Caco-2 (cell line): ENCODE measurements at regions of chr2 and their contacts with region 1.

Region 1: DNA sequence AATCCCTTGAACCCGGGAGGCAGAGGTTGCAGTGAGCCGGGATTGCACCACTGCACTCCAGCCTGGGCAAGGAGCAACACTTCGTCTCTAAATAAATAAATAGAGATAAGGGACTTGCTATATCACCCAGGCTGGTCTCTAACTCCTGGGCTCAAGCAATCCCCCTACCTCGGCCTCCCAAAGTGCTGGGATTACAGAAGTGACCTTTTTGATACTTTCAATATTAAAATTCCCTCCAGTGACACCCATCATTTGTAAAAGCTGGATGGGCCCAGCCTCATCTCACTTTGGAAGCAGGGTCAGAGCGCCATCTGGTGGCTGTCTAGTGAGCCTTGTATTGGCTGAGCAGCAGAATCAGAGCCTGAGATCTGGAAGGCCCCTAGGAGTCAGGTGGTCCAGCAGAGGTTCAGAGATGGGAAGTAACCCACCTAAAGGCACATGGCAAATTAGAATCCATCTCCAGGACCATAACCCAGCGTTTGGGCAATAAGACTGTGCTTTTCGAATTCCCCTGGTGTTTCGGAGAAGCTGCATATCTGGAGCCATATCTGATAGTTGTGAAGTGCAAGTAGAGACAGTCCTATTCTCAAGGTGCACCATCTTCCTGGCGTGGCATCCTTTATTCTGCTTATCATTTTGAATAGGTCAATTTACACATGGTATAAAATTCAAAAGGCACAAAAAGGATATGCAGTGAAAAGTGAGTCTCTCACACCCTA is 18.3 kb upstream of the SLC35F6 start:
- DNase-seq: peak; percentile 85 to 89
- H3K4me3 ChIP-seq: no peak overlapping the region
- H3K4me3 Mint-ChIP-seq: no peak overlapping the region
- H3K27ac Mint-ChIP-seq: no peak overlapping the region
- H3K4me1 ChIP-seq: peaks cover 19% of the 10 kb centered on the region
- H3K4me1 Mint-ChIP-seq: peaks cover 11% of the 10 kb centered on the region
- H3K27me3 ChIP-seq: no peaks in the 10 kb centered on the region
- H3K27me3 Mint-ChIP-seq: no peaks in the 10 kb centered on the region
- CTCF ChIP-seq: peak; percentile 93 to 98

Region 2: GRCh38 chr2:26235085-26235484 is 510.7 kb before region 1 on chr2:
- CTCF ChIA-PET with region 1: no interaction called
- POLR2A ChIA-PET with region 1: no interaction called
- intact Hi-C with region 1: no loop called
- DNase-seq: peak in 1 of 2 experiments; percentile 22
- H3K4me3 ChIP-seq: no peak overlapping the region
- H3K4me3 Mint-ChIP-seq: no peak overlapping the region
- H3K27ac Mint-ChIP-seq: no peak overlapping the region
- H3K4me1 ChIP-seq: peaks cover 6% of the 10 kb centered on the region; the same call in 1 of the 2 replicates
- H3K4me1 Mint-ChIP-seq: peaks cover 8% of the 10 kb centered on the region
- H3K27me3 ChIP-seq: no peaks in the 10 kb centered on the region
- H3K27me3 Mint-ChIP-seq: no peaks in the 10 kb centered on the region
- CTCF ChIP-seq: peak; percentile 30 to 33

Region 3: GRCh38 chr2:26503231-26503880 is 242.4 kb before region 1 on chr2:
- CTCF ChIA-PET with region 1: no interaction called
- POLR2A ChIA-PET with region 1: no interaction called
- intact Hi-C with region 1: loop called (anchors 1 kb)
- DNase-seq: peak; percentile 92 to 93
- H3K4me3 ChIP-seq: peak overlapping the region; percentile 48
- H3K4me3 Mint-ChIP-seq: peak overlapping the region; percentile 78
- H3K27ac Mint-ChIP-seq: peak overlapping the region; percentile 37
- H3K4me1 ChIP-seq: no peaks in the 10 kb centered on the region
- H3K4me1 Mint-ChIP-seq: peaks cover 7% of the 10 kb centered on the region
- H3K27me3 ChIP-seq: no peaks in the 10 kb centered on the region
- H3K27me3 Mint-ChIP-seq: peaks cover 6% of the 10 kb centered on the region
- CTCF ChIP-seq: peak; percentile 84 to 89

Region 4: GRCh38 chr2:26521054-26521912 is 224.5 kb before region 1 on chr2:
- CTCF ChIA-PET with region 1: no interaction called
- POLR2A ChIA-PET with region 1: no interaction called
- intact Hi-C with region 1: loop called (anchors 1 kb)
- DNase-seq: peak; percentile 60 to 71
- H3K4me3 ChIP-seq: no peak overlapping the region
- H3K4me3 Mint-ChIP-seq: no peak overlapping the region
- H3K27ac Mint-ChIP-seq: no peak overlapping the region
- H3K4me1 ChIP-seq: no peaks in the 10 kb centered on the region
- H3K4me1 Mint-ChIP-seq: no peaks in the 10 kb centered on the region
- H3K27me3 ChIP-seq: no peaks in the 10 kb centered on the region; the same call in 1 of the 2 replicates
- H3K27me3 Mint-ChIP-seq: peaks cover 5% of the 10 kb centered on the region
- CTCF ChIP-seq: peak; percentile 79 to 88

Region 5: GRCh38 chr2:26605195-26605998 is 140.4 kb before region 1 on chr2:
- CTCF ChIA-PET with region 1: interaction called, 35 read pairs
- POLR2A ChIA-PET with region 1: no interaction called
- intact Hi-C with region 1: loop called (anchors 1 kb)
- DNase-seq: peak; percentile 66 to 79
- H3K4me3 ChIP-seq: no peak overlapping the region
- H3K4me3 Mint-ChIP-seq: no peak overlapping the region
- H3K27ac Mint-ChIP-seq: peak overlapping the region; percentile 76
- H3K4me1 ChIP-seq: peaks cover 22% of the 10 kb centered on the region
- H3K4me1 Mint-ChIP-seq: peaks cover 32% of the 10 kb centered on the region
- H3K27me3 ChIP-seq: no peaks in the 10 kb centered on the region
- H3K27me3 Mint-ChIP-seq: peaks cover 3% of the 10 kb centered on the region
- CTCF ChIP-seq: peak; percentile 82 to 92

Region 6: GRCh38 chr2:26685989-26686839 is 59.6 kb before region 1 on chr2:
- CTCF ChIA-PET with region 1: no interaction called
- POLR2A ChIA-PET with region 1: no interaction called
- intact Hi-C with region 1: loop called (anchors 5 kb)
- DNase-seq: peak in 1 of 2 experiments; percentile 25
- H3K4me3 ChIP-seq: no peak overlapping the region
- H3K4me3 Mint-ChIP-seq: no peak overlapping the region
- H3K27ac Mint-ChIP-seq: no peak overlapping the region
- H3K4me1 ChIP-seq: peaks cover 22% of the 10 kb centered on the region
- H3K4me1 Mint-ChIP-seq: peaks cover 25% of the 10 kb centered on the region
- H3K27me3 ChIP-seq: no peaks in the 10 kb centered on the region
- H3K27me3 Mint-ChIP-seq: peaks cover 6% of the 10 kb centered on the region
- CTCF ChIP-seq: no peak

Region 7: DNA sequence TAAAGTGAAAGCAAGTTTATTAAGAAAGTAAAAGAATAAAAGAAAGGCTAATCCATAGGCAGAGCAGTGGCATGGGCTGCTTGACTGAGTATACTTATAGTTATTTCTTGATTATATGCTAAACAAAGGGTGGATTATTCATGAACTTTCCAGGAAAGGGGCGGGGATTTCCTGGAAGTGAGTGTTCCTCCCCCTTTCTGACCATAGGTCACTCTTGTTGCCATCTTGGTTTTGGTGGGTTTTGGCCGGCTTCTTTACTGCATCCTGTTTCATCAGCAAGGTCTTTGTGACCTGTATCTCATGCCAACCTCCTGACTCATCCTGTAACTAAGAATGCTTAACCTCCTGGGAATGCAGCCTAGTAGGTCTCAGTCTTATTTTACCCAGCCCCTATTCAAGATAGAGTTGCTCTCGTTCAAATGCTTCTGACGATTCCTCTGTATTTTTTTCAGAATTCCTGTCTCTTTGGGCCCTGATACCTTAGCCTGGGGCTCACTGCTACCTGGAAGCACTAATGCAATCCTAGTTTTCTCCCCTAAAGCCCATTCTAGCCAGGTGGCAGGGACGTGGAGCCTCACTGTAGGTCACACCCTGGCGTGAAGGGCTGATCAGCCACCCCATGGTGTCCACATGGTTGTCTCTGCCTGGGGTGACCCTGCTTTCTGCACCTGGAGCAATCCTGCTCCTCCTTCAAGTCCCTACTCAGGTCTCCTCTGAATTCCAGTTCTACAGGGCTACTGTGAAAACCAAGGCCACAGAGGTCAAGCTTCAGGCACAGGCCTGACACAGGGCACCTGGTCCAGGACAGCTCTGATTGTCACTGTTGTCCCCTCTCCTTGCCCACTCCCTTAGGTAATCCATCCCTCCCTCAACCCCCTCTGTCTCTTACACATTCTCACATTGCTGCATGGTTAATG is 12.4 kb after region 1 on chr2:
- CTCF ChIA-PET with region 1: interaction called, 3 read pairs
- POLR2A ChIA-PET with region 1: no interaction called
- intact Hi-C with region 1: loop called (anchors 1 kb)
- DNase-seq: peak; percentile 89 to 94
- H3K4me3 ChIP-seq: no peak overlapping the region
- H3K4me3 Mint-ChIP-seq: peak overlapping the region; percentile 63
- H3K27ac Mint-ChIP-seq: peak overlapping the region; percentile 100
- H3K4me1 ChIP-seq: peaks cover 62% of the 10 kb centered on the region
- H3K4me1 Mint-ChIP-seq: peaks cover 17% of the 10 kb centered on the region
- H3K27me3 ChIP-seq: no peaks in the 10 kb centered on the region
- H3K27me3 Mint-ChIP-seq: no peaks in the 10 kb centered on the region
- CTCF ChIP-seq: no peak